ENCODE measurements at regions of chrX and their contacts with region 1.

Region 1: GRCh38 chrX:75273483-75273882 is 402 bp upstream of the UPRT start:
- DNase-seq: no peak
- ATAC-seq: peak; percentile 2
- H3K4me3 Mint-ChIP-seq: peak overlapping the region; percentile 97
- H3K27ac Mint-ChIP-seq: peak overlapping the region; percentile 93
- H3K4me1 Mint-ChIP-seq: peaks cover 47% of the 10 kb centered on the region
- H3K27me3 Mint-ChIP-seq: no peaks in the 10 kb centered on the region
- CTCF ChIP-seq: no peak

Region 2: DNA sequence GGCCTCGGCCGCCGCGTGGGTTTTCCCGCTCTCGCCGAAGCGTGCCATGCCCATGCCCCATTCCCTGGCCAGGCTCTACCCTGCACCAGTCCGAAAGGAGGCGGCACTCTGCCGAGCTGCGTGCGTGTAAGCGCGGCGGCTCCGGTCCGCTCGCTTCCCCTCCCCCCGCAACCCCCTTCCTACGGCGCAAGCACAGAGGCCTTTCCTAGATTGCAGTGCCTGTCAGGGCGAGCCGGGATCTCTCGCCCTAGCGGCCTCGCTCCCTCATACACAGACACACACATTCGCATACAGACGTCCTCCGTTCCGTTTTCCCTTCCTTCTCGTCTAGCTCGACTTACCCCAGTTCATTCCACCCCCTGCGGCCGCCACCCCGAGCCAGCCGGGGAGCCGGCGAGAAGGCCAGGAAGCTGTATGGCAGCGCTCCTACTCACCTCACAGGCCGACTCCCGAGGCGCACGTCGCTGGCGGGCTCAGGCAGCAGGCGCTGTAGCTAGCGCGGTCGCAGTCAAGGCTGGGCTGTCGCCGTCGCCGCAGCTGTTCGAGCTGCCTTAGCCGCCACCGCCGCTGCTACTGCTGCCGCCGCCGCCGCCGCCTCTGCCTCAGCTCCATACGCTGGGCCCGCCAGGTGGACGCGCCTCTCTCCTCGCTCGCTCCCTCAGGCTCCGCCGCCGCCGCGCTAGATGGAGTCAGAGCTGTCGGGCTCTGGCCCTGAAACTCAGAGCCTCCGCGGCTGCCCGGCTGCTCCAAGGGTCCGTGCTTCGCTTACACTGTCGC is 348.8 kb before region 1 on chrX:
- CTCF ChIA-PET with region 1: no interaction called
- POLR2A ChIA-PET with region 1: no interaction called
- intact Hi-C with region 1: loop called (anchors 5 kb)
- DNase-seq: peak; percentile 18
- ATAC-seq: peak; percentile 55
- H3K4me3 Mint-ChIP-seq: peak overlapping the region; percentile 87
- H3K27ac Mint-ChIP-seq: peak overlapping the region; percentile 80
- H3K4me1 Mint-ChIP-seq: peaks cover 25% of the 10 kb centered on the region
- H3K27me3 Mint-ChIP-seq: peaks cover 5% of the 10 kb centered on the region
- CTCF ChIP-seq: no peak

Region 3: DNA sequence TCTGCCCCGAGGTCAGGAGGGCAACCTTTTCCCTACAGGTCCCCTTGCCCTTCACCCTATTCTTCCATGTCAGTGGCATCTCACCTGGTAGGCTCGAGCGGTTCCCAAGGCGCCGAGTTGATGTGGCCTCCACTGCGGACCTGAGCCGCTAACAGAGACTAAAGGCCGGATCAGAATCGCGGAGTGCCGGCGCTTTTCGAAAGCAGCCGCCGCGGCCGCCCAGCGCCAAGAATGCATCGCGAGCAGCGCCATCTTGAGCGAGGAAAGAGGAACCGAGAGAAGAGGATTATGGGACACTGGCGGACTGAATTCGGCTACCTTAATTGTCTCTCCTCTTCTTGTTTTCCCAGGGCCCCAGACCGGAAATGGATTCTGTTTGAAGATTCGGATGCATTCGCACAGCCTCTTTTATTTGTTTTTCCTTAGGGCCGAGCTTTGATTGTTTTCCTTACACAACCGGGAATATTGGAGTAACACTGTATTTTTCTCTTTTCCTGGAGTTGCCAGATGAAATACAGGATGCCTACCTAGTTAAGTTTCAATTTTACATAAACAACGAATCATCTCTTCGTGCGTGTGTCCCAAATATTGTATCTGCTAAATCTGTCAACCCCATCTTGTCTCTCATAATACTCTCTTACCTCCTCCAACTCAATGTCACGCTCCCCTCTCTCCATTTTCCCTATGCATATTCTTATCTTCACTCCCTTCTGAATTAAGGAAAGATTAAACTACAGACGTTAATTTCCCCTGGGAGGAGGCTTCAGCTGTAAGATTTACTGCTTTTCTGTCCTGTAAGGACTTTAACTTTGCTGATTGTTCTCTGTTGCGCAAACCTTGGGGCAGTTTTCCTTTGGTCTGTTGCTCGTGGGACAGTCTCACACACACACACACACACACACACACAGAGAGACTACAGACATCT is 117.2 kb before region 1 on chrX and contains the start of gene ABCB7:
- CTCF ChIA-PET with region 1: no interaction called
- POLR2A ChIA-PET with region 1: interaction called, 4 read pairs
- intact Hi-C with region 1: loop called (anchors 2 kb)
- DNase-seq: peak; percentile 41
- ATAC-seq: peak; percentile 91
- H3K4me3 Mint-ChIP-seq: peak within 1 kb of the TSS; percentile 94
- H3K27ac Mint-ChIP-seq: peak within 1 kb of the TSS; percentile 96
- H3K4me1 Mint-ChIP-seq: peaks cover 39% of the 10 kb centered on the region
- H3K27me3 Mint-ChIP-seq: no peaks in the 10 kb centered on the region
- CTCF ChIP-seq: no peak
- total RNA-seq, gene ABCB7: 41.3 and 42.2 TPM in 2 replicates

Region 4: DNA sequence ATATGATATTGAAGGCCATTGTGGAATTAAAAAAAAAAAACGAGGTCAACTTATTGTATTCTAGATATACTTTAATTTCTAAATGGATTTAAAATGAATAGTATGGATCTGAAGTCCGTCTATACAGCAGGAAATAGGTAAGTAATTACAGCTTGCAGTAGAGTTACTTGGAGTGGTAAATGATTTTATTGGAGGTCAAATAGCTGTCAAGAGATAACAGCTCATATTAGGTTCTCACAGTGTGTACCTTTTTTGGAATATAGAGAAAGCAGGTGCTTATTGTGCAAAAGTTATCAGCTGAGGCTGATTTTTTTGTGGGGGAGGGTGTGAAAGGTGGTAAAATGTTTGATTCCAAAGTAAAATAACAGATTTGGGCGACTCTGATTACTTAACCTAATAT is 18.1 kb after region 1 on chrX:
- CTCF ChIA-PET with region 1: no interaction called
- POLR2A ChIA-PET with region 1: no interaction called
- intact Hi-C with region 1: no loop called
- DNase-seq: no peak
- ATAC-seq: no peak
- H3K4me3 Mint-ChIP-seq: no peak overlapping the region
- H3K27ac Mint-ChIP-seq: no peak overlapping the region
- H3K4me1 Mint-ChIP-seq: no peaks in the 10 kb centered on the region
- H3K27me3 Mint-ChIP-seq: no peaks in the 10 kb centered on the region
- CTCF ChIP-seq: no peak

Region 5: DNA sequence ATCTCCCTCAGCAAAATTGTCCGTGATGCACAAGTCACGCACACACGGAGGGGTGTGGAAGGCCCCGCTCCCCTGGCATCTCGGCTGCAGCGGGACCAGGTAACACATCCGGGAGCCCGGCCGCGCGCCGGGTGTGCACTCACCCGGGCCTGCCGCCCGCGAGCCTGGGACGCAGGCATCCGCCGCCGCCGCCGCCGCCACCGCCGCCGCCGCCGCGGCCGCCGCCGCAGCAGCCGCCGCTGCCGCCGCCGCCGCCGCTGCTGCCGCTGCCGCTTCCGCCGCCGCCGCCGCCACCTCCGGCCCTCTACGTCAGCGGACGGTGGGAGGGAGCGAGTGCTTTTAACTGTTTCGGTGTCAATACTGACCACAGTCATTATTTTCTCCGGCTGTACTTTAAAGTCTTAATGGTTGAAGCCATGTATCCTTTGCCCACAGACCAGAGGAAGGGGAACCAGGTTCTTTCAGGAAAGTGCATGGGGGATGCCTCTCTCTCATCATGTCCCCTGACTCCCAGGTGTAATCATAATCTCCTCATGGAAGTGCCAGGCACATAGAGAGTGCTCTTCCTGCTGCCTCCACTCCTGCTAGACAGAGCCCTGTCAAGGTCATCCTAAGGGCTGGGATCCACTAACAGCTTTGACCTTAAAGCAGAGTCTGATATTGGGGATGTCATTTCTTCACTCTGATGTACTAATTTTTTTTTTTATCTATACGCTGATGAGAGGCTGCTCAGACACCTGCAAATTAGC is 473.6 kb after region 1 on chrX:
- CTCF ChIA-PET with region 1: no interaction called
- POLR2A ChIA-PET with region 1: no interaction called
- intact Hi-C with region 1: loop called (anchors 10 kb)
- DNase-seq: peak; percentile 25
- ATAC-seq: peak; percentile 75
- H3K4me3 Mint-ChIP-seq: peak overlapping the region; percentile 84
- H3K27ac Mint-ChIP-seq: no peak overlapping the region
- H3K4me1 Mint-ChIP-seq: peaks cover 15% of the 10 kb centered on the region
- H3K27me3 Mint-ChIP-seq: no peaks in the 10 kb centered on the region
- CTCF ChIP-seq: no peak

Region 6: GRCh38 chrX:76427560-76428242 is 1154.2 kb after region 1 on chrX and contains the start of gene MAGEE1:
- CTCF ChIA-PET with region 1: no interaction called
- POLR2A ChIA-PET with region 1: no interaction called
- intact Hi-C with region 1: loop called (anchors 10 kb)
- DNase-seq: peak; percentile 70
- ATAC-seq: peak; percentile 83
- H3K4me3 Mint-ChIP-seq: peak within 1 kb of the TSS; percentile 91
- H3K27ac Mint-ChIP-seq: peak within 1 kb of the TSS; percentile 76
- H3K4me1 Mint-ChIP-seq: peaks cover 11% of the 10 kb centered on the region
- H3K27me3 Mint-ChIP-seq: no peaks in the 10 kb centered on the region
- CTCF ChIP-seq: no peak
- total RNA-seq, gene MAGEE1: 3.1 and 3.3 TPM in 2 replicates